CD8-positive, alpha-beta T cell (primary cell): ENCODE measurements at regions of chr5 and their contacts with region 1.

Region 1: GRCh38 chr5:52693280-52693679 is 94.4 kb upstream of the ITGA1 start:
- DNase-seq: peak in 7 of 9 experiments; percentile 14 to 60 (median 46)
- ATAC-seq: peak; percentile 48
- H3K4me3 ChIP-seq: no peak overlapping the region
- H3K4me3 Mint-ChIP-seq: no peak overlapping the region
- H3K27ac ChIP-seq: no peak overlapping the region
- H3K27ac Mint-ChIP-seq: no peak overlapping the region
- H3K4me1 ChIP-seq: no peaks in the 10 kb centered on the region
- H3K4me1 Mint-ChIP-seq: peaks cover 6% of the 10 kb centered on the region
- H3K27me3 ChIP-seq: no peaks in the 10 kb centered on the region
- H3K27me3 Mint-ChIP-seq: no peaks in the 10 kb centered on the region
- CTCF ChIP-seq: peak; percentile 58

Region 2: DNA sequence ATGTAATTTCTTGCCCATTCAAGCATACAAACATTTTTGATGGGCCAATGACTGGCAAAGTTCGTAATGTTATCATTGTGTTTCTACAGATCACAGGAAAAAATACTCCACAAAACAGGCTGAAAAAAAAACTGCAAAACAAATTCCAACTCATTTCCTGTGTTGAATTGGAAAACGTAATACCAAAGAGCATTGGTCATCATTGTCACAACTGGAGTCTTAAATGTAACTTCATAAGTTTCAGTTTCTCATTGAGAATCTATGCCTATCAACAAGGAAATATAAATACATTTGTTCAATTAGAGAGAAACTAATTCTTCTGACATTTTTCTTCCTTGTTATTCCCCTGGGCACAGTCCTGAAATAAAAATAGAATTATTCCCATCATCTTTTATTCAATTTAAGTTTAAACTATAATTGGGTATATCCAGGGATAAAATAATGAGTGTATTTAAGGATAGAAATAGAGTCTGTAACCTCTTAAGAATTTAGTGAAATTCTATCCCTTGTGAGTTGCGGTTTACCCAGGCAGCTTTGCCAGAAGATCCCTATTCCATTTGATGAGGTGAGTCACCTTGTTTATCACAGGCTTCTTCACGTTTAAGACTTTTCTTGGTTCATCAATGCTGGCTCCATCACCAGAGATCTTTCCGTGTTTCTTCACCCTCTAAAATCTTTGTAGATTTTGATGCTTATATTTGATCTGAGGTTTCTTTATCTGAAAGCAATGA is 18.3 kb before region 1 on chr5:
- CTCF ChIA-PET with region 1: no interaction called
- POLR2A ChIA-PET with region 1: no interaction called
- intact Hi-C with region 1: no loop called
- DNase-seq: no peak
- ATAC-seq: no peak
- H3K4me3 ChIP-seq: no peak overlapping the region
- H3K4me3 Mint-ChIP-seq: no peak overlapping the region
- H3K27ac ChIP-seq: no peak overlapping the region
- H3K27ac Mint-ChIP-seq: no peak overlapping the region
- H3K4me1 ChIP-seq: no peaks in the 10 kb centered on the region
- H3K4me1 Mint-ChIP-seq: peaks cover 22% of the 10 kb centered on the region
- H3K27me3 ChIP-seq: no peaks in the 10 kb centered on the region
- H3K27me3 Mint-ChIP-seq: no peaks in the 10 kb centered on the region
- CTCF ChIP-seq: no peak

Region 3: GRCh38 chr5:52709171-52709925 is 16.1 kb after region 1 on chr5:
- CTCF ChIA-PET with region 1: interaction called, 22 read pairs
- POLR2A ChIA-PET with region 1: interaction called, 3 read pairs
- intact Hi-C with region 1: no loop called
- DNase-seq: peak in 3 of 9 experiments; percentile 15 to 27 (median 15)
- ATAC-seq: peak; percentile 23
- H3K4me3 ChIP-seq: no peak overlapping the region
- H3K4me3 Mint-ChIP-seq: peak overlapping the region; percentile 16
- H3K27ac ChIP-seq: no peak overlapping the region
- H3K27ac Mint-ChIP-seq: peak overlapping the region; percentile 34
- H3K4me1 ChIP-seq: peaks cover 28% of the 10 kb centered on the region
- H3K4me1 Mint-ChIP-seq: peaks cover 62% of the 10 kb centered on the region
- H3K27me3 ChIP-seq: no peaks in the 10 kb centered on the region
- H3K27me3 Mint-ChIP-seq: no peaks in the 10 kb centered on the region
- CTCF ChIP-seq: no peak

Region 4: GRCh38 chr5:52771343-52772039 is 78.2 kb after region 1 on chr5:
- CTCF ChIA-PET with region 1: interaction called, 10 read pairs
- POLR2A ChIA-PET with region 1: interaction called, 4 read pairs
- intact Hi-C with region 1: no loop called
- DNase-seq: peak in 5 of 9 experiments; percentile 6 to 57 (median 26)
- ATAC-seq: peak; percentile 45
- H3K4me3 ChIP-seq: no peak overlapping the region
- H3K4me3 Mint-ChIP-seq: peak overlapping the region; percentile 63
- H3K27ac ChIP-seq: no peak overlapping the region
- H3K27ac Mint-ChIP-seq: peak overlapping the region; percentile 87
- H3K4me1 ChIP-seq: peaks cover 24% of the 10 kb centered on the region
- H3K4me1 Mint-ChIP-seq: peaks cover 59% of the 10 kb centered on the region
- H3K27me3 ChIP-seq: no peaks in the 10 kb centered on the region
- H3K27me3 Mint-ChIP-seq: no peaks in the 10 kb centered on the region
- CTCF ChIP-seq: no peak

Region 5: DNA sequence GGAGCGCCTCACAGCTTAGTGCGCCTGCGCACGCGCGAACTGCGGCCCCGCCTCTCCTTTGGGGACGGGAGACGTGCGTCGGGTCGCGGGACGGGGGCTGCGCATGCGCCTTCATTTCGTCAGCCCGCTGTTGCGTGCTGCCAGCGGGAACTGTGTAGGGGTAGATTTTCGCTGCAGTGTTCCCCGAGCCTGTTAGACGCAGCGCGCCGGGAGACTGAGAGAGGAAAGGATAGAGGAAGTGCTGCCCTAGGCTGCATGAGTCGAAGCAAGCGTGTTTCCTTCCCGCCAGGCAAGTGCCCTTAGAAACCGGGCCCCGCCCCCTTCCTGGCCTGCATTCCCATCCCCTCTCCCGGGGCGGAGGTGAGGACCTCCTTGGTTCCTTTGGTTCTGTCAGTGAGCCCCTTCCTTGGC is 106.7 kb after region 1 on chr5:
- CTCF ChIA-PET with region 1: interaction called, 21 read pairs
- POLR2A ChIA-PET with region 1: no interaction called
- intact Hi-C with region 1: no loop called
- DNase-seq: peak; percentile 87 to 97 (median 96)
- ATAC-seq: peak; percentile 87
- H3K4me3 ChIP-seq: peak overlapping the region; percentile 81 to 89
- H3K4me3 Mint-ChIP-seq: peak overlapping the region; percentile 97
- H3K27ac ChIP-seq: peak overlapping the region; percentile 70 to 72
- H3K27ac Mint-ChIP-seq: peak overlapping the region; percentile 96
- H3K4me1 ChIP-seq: peaks cover 33% of the 10 kb centered on the region
- H3K4me1 Mint-ChIP-seq: peaks cover 68% of the 10 kb centered on the region
- H3K27me3 ChIP-seq: no peaks in the 10 kb centered on the region
- H3K27me3 Mint-ChIP-seq: no peaks in the 10 kb centered on the region
- CTCF ChIP-seq: no peak

Region 6: GRCh38 chr5:52909192-52909591 is 215.9 kb after region 1 on chr5:
- CTCF ChIA-PET with region 1: interaction called, 48 read pairs
- POLR2A ChIA-PET with region 1: no interaction called
- intact Hi-C with region 1: no loop called
- DNase-seq: no peak
- ATAC-seq: no peak
- H3K4me3 ChIP-seq: no peak overlapping the region
- H3K4me3 Mint-ChIP-seq: no peak overlapping the region
- H3K27ac ChIP-seq: no peak overlapping the region
- H3K27ac Mint-ChIP-seq: no peak overlapping the region
- H3K4me1 ChIP-seq: no peaks in the 10 kb centered on the region
- H3K4me1 Mint-ChIP-seq: peaks cover 9% of the 10 kb centered on the region
- H3K27me3 ChIP-seq: no peaks in the 10 kb centered on the region
- H3K27me3 Mint-ChIP-seq: no peaks in the 10 kb centered on the region
- CTCF ChIP-seq: no peak